PC-3 (cell line): ENCODE measurements at regions of chr13 and their contacts with region 1.

Region 1: DNA sequence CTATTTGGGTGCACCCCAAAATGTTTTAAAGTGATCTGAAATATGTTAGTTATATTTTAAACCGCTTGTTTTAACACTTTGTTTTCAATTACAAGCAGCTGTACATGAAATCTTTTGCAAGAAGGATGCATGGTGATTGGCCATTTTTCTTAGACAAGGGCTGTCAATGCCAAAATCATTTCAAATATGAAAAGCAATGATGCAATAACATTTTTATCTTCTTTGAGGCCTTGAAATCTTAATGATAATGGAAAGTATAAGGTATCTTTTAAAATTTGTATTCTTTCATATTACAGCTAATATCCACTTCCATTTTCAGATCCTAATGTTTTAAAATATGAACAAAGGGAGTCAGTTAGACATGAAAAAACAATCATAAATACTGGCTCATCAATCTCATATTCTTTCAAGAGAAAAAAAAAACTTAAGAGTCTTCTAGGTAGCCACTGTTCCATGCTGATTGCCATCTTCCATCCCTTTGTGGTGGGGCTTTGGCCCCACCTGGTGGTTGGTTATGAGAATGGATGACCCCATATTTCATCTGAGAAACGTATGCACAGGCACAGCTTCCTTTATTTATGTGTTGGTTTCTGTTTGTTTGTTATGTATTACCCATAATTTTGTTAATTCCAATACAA is 330.3 kb upstream of the MIR17HG start:
- DNase-seq: peak; percentile 78
- ATAC-seq: peak; percentile 99
- H3K4me3 ChIP-seq: peak overlapping the region; percentile 52
- H3K27ac ChIP-seq: no peak overlapping the region
- H3K4me1 ChIP-seq: no peaks in the 10 kb centered on the region
- H3K27me3 ChIP-seq: no peaks in the 10 kb centered on the region
- CTCF ChIP-seq: peak; percentile 83

Region 2: DNA sequence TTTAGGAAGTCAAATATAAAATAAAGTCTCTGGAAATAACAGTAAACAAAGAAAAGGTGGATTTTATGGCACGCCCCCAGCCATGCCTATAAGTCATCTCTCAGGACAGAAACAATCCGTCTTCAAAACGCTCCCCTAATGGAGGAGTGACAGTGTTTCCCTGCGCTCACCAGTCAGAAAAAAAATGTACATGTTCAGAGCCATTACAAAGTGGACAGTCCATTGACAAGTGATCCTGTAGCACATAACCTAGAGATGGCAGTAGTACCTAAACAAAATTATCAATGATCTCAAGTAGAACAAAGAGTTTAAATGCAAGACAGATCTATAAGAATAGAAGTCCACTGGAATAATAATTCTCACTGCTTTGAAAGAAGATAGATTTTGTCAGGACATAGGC is 561.3 kb before region 1 on chr13:
- CTCF ChIA-PET with region 1: no interaction called
- POLR2A ChIA-PET with region 1: no interaction called
- intact Hi-C with region 1: loop called (anchors 10 kb)
- DNase-seq: peak; percentile 25
- ATAC-seq: peak; percentile 54
- H3K4me3 ChIP-seq: no peak overlapping the region
- H3K27ac ChIP-seq: no peak overlapping the region
- H3K4me1 ChIP-seq: peaks cover 6% of the 10 kb centered on the region
- H3K27me3 ChIP-seq: no peaks in the 10 kb centered on the region
- CTCF ChIP-seq: peak; percentile 32

Region 3: GRCh38 chr13:90839061-90839460 is 178.1 kb before region 1 on chr13:
- CTCF ChIA-PET with region 1: interaction called, 11 read pairs
- POLR2A ChIA-PET with region 1: no interaction called
- intact Hi-C with region 1: no loop called
- DNase-seq: peak; percentile 82
- ATAC-seq: peak; percentile 79
- H3K4me3 ChIP-seq: peak overlapping the region; percentile 35; the same call in 1 of the 2 replicates
- H3K27ac ChIP-seq: peak overlapping the region; percentile 98
- H3K4me1 ChIP-seq: peaks cover 30% of the 10 kb centered on the region
- H3K27me3 ChIP-seq: no peaks in the 10 kb centered on the region
- CTCF ChIP-seq: no peak

Region 4: GRCh38 chr13:90883592-90883991 is 133.6 kb before region 1 on chr13:
- CTCF ChIA-PET with region 1: no interaction called
- POLR2A ChIA-PET with region 1: no interaction called
- intact Hi-C with region 1: loop called (anchors 1 kb)
- DNase-seq: peak; percentile 28
- ATAC-seq: peak; percentile 42; the same call in 1 of the 2 replicates
- H3K4me3 ChIP-seq: no peak overlapping the region
- H3K27ac ChIP-seq: no peak overlapping the region
- H3K4me1 ChIP-seq: no peaks in the 10 kb centered on the region
- H3K27me3 ChIP-seq: no peaks in the 10 kb centered on the region
- CTCF ChIP-seq: peak; percentile 44; the same call in 1 of the 2 replicates

Region 5: GRCh38 chr13:90968166-90968904 is 48.8 kb before region 1 on chr13:
- CTCF ChIA-PET with region 1: interaction called, 10 read pairs
- POLR2A ChIA-PET with region 1: no interaction called
- intact Hi-C with region 1: loop called (anchors 2 kb)
- DNase-seq: peak; percentile 65
- ATAC-seq: peak; percentile 96
- H3K4me3 ChIP-seq: no peak overlapping the region
- H3K27ac ChIP-seq: no peak overlapping the region
- H3K4me1 ChIP-seq: no peaks in the 10 kb centered on the region
- H3K27me3 ChIP-seq: no peaks in the 10 kb centered on the region
- CTCF ChIP-seq: peak; percentile 74

Region 6: DNA sequence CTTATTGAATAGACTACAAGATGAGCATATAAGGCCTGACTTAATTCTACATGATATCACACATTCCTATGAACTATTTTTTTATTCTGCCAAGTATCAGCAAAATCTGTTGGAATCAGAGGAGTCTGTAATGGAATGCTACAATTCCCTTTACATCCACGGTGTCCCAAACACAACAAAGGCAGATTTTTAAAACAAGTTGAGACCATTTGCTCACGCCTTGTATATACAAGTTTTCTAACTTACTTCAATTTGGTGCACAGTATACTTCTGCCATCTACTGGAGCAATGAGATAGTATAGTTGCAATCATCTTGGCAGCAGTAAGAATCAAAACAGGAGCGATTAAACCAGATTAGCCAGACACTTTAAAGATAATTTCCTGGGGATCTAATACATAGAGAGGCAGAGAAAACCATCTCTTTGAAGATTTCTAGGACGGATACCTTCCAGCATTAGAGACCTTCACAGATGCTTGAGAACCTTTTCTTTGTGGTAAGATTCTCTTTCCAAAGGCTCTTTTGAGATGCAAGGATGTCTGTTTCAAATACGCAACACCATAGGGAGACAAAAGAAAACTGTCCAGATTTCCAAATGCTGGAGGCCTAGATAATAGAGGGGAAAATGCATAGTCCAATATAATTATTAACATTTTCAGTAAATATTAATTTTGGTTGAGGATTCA is 28.3 kb after region 1 on chr13:
- CTCF ChIA-PET with region 1: no interaction called
- POLR2A ChIA-PET with region 1: no interaction called
- intact Hi-C with region 1: loop called (anchors 2 kb)
- DNase-seq: peak; percentile 33
- ATAC-seq: peak; percentile 83
- H3K4me3 ChIP-seq: no peak overlapping the region
- H3K27ac ChIP-seq: no peak overlapping the region
- H3K4me1 ChIP-seq: no peaks in the 10 kb centered on the region
- H3K27me3 ChIP-seq: no peaks in the 10 kb centered on the region
- CTCF ChIP-seq: peak; percentile 59